ENCODE measurements at regions of chr9 and their contacts with region 1.

Region 1: GRCh38 chr9:135343837-135344522 is 135.6 kb upstream of the PPP1R26 start:
- DNase-seq: peak; percentile 57 to 82 (median 63)
- ATAC-seq: peak; percentile 55 to 77 (median 66)
- H3K4me3 ChIP-seq: no peak overlapping the region
- H3K27ac ChIP-seq: no peak overlapping the region
- H3K4me1 ChIP-seq: peaks cover 0 to 14% (median 0%) of the 10 kb centered on the region in 12 donors
- H3K27me3 ChIP-seq: peaks cover 0 to 70% (median 17%) of the 10 kb centered on the region in 9 donors
- CTCF ChIP-seq: peak; percentile 84 to 95 (median 89)
- POLR2A ChIP-seq: no peak

Region 2: GRCh38 chr9:135085830-135086546 is 258.0 kb before region 1 on chr9:
- intact Hi-C with region 1: loop called (anchors 1 to 2 kb)
- DNase-seq: peak; percentile 71 to 81 (median 74)
- ATAC-seq: peak; percentile 59 to 82 (median 74)
- H3K4me3 ChIP-seq: peak overlapping the region in 10 of 12 donors; percentile 32 to 63 (median 46)
- H3K27ac ChIP-seq: peak overlapping the region in 4 of 12 donors; percentile 5 to 16 (median 6)
- H3K4me1 ChIP-seq: peaks cover 0 to 38% (median 19%) of the 10 kb centered on the region in 12 donors
- H3K27me3 ChIP-seq: peaks cover 15 to 51% (median 23%) of the 10 kb centered on the region in 9 donors
- CTCF ChIP-seq: peak; percentile 82 to 98 (median 96)
- POLR2A ChIP-seq: no peak

Measured in heart left ventricle (tissue), 16 donors.